A549 (cell line): ENCODE measurements at regions of chr3 and their contacts with region 1.

Region 1: GRCh38 chr3:13495921-13496723 is 16.0 kb downstream of the HDAC11 start:
- DNase-seq: peak; percentile 59 to 78
- ATAC-seq: peak; percentile 74 to 88
- H3K4me3 ChIP-seq: no peak overlapping the region
- H3K27ac ChIP-seq: peak overlapping the region in 1 of 2 experiments; percentile 41; a peak in 2 of 6 replicates
- H3K4me1 ChIP-seq: no peaks in the 10 kb centered on the region
- CTCF ChIP-seq: peak; percentile 86
- EP300 ChIP-seq: no peak
- POLR2A ChIP-seq: no peak
- RAD21 ChIP-seq: peak; percentile 92 to 98

Region 2: GRCh38 chr3:13461169-13462158 is 34.7 kb before region 1 on chr3:
- CTCF ChIA-PET with region 1: interaction called, 10 read pairs
- POLR2A ChIA-PET with region 1: no interaction called
- DNase-seq: peak; percentile 58 to 84
- ATAC-seq: peak; percentile 74 to 96
- H3K4me3 ChIP-seq: no peak overlapping the region
- H3K27ac ChIP-seq: no peak overlapping the region
- H3K4me1 ChIP-seq: no peaks in the 10 kb centered on the region
- CTCF ChIP-seq: peak; percentile 55
- EP300 ChIP-seq: no peak
- POLR2A ChIP-seq: no peak
- RAD21 ChIP-seq: peak; percentile 26 to 52; a peak in 3 of 5 replicates

Region 3: DNA sequence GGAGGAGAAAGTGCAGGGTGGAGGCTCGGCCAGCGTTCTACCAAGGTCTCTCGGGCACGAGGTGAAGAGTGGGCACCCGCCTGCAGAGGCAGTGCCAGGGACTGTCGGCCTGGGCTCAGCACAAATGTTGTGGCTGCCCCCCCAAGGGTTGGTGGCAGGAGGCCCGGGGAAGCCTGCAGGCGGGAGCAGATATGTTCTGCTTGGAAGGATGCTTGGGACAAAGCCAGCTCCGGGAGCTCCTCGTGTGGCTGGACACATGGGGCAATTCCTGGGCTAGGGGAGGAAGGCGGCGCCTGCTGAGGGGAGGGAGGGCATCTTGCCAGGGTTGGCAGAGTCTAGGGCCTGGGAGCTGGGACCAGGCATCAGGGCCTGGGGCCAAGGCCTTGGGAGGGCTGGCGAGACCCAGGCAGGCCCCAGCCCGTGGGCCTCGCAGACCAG is 22.4 kb after region 1 on chr3:
- CTCF ChIA-PET with region 1: interaction called, 98 read pairs
- POLR2A ChIA-PET with region 1: no interaction called
- DNase-seq: no peak
- ATAC-seq: 0 out of 6 replicates have a peak, but pooled peaks of 1 of the 2 experiments have one; percentile 14
- H3K4me3 ChIP-seq: no peak overlapping the region
- H3K27ac ChIP-seq: no peak overlapping the region
- H3K4me1 ChIP-seq: no peaks in the 10 kb centered on the region
- CTCF ChIP-seq: no peak
- EP300 ChIP-seq: no peak
- POLR2A ChIP-seq: no peak
- RAD21 ChIP-seq: no peak

Region 4: DNA sequence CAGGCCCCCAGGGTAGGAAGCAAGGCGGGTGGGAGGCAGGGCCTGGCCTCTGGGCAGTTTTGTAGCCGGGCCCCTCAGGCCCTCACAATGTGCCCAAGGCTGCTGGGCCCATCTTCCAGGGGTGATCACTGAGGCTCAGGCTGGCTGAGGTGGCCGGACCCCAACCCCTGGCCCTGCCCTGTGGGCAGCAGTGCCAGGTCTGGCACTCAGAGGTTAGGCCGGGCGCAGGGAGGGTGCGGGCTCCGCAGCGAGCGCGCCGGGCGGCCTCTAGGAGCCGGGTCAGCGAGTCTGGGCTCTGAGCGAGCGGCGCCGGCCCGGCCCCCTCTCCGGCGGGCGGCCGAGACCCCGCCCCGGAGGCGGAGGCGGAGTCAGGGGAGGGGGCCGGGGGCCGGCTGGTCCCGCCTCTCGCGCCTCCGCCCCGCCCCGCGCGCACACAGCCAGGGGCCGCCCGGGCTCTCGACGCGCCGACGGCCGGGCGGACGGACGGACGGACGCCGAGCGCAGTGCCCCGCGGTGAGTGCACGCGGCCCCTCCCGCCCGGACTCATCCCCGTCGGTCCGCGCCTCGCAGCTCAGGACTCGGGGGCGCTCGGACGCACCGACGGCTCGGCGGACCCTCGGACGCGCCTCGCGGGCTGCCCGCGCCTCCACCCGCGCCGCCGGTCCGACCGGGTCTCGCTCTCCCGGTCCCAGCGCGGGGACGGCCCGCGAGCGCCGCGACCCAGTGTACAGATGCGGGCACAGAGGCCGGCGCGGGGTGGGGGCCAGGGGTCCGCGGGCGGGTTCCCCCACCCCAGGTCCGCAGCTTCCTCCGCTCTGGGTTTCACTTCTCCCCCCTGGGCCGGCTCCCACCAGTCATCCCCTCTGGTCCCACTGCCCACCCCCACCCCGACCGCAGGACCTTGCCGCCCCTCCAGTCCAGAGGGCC is 52.8 kb after region 1 on chr3 and contains the start of gene FBLN2:
- CTCF ChIA-PET with region 1: interaction called, 13 read pairs
- POLR2A ChIA-PET with region 1: no interaction called
- DNase-seq: no peak
- ATAC-seq: peak; percentile 16 to 73; a peak in 4 of 6 replicates
- H3K4me3 ChIP-seq: peak within 1 kb of the TSS; percentile 26
- H3K27ac ChIP-seq: peak within 1 kb of the TSS; percentile 51 to 82; a peak in 4 of 6 replicates
- H3K4me1 ChIP-seq: peaks cover 34% of the 10 kb centered on the region
- CTCF ChIP-seq: no peak
- EP300 ChIP-seq: no peak
- POLR2A ChIP-seq: no peak
- RAD21 ChIP-seq: no peak
- polyA plus RNA-seq, gene FBLN2: 1.1 and 1.3 TPM in 2 replicates

Region 5: DNA sequence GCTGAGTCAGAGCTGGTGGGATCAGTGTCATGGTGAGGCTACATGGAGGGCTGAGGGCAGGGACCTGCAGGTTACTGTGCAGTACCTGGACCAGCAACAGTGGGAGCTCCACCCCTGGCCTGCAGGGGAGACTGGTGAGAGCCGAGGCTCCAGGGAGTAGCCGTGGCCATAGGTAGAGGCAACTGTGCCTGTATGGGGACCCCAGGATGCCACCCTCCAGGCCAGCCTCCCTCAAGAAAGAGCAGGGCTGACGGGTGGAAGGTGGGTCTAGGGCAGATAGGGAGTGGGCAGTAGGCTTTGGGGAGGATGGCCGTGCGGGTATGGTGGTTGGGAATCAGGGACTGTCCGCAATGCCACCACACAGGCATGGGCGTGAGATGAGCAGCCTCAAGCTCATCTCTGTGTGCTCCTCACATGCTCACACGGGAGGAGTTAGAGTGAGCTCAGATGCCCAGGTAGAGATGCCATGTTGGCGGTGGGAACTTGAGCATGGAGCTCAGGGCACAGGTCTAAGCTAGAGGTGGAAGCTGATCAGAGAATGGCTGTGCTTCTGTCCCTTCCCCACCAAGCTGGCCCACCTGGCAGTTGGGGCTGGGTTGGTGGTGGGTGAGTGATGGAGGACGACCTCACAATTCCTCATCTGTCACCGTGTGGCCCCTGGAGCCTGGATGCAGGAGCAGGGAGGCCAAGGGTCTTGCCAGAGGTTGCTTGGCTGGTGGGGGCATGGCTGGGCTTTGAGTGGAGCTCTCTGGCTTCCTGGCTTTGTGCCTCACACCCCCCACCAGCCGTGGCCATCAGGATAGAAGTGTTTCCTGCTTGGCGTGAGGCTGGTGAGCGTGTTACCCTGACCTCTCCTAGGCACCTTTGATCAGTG is 88.5 kb after region 1 on chr3:
- CTCF ChIA-PET with region 1: interaction called, 22 read pairs
- POLR2A ChIA-PET with region 1: no interaction called
- DNase-seq: no peak
- ATAC-seq: no peak; a peak in 2 of 6 replicates
- H3K4me3 ChIP-seq: no peak overlapping the region
- H3K27ac ChIP-seq: no peak overlapping the region
- H3K4me1 ChIP-seq: no peaks in the 10 kb centered on the region
- CTCF ChIP-seq: no peak
- EP300 ChIP-seq: no peak
- POLR2A ChIP-seq: no peak
- RAD21 ChIP-seq: no peak

Region 6: GRCh38 chr3:13623099-13623654 is 127.1 kb after region 1 on chr3:
- CTCF ChIA-PET with region 1: interaction called, 1,096 read pairs
- POLR2A ChIA-PET with region 1: no interaction called
- DNase-seq: no peak
- ATAC-seq: no peak; a peak in 1 of 6 replicates
- H3K4me3 ChIP-seq: no peak overlapping the region
- H3K27ac ChIP-seq: no peak overlapping the region
- H3K4me1 ChIP-seq: no peaks in the 10 kb centered on the region
- CTCF ChIP-seq: no peak
- EP300 ChIP-seq: no peak
- POLR2A ChIP-seq: no peak
- RAD21 ChIP-seq: no peak